Right ventricle myocardium inferior (tissue), 1 donor: ENCODE measurements at regions of chr5 and their contacts with region 1.

Region 1: GRCh38 chr5:141320225-141321169 is at the start of gene TAF7:
- DNase-seq: peak; percentile 96
- ATAC-seq: peak; percentile 99
- total RNA-seq, gene TAF7: 101 TPM

Region 2: DNA sequence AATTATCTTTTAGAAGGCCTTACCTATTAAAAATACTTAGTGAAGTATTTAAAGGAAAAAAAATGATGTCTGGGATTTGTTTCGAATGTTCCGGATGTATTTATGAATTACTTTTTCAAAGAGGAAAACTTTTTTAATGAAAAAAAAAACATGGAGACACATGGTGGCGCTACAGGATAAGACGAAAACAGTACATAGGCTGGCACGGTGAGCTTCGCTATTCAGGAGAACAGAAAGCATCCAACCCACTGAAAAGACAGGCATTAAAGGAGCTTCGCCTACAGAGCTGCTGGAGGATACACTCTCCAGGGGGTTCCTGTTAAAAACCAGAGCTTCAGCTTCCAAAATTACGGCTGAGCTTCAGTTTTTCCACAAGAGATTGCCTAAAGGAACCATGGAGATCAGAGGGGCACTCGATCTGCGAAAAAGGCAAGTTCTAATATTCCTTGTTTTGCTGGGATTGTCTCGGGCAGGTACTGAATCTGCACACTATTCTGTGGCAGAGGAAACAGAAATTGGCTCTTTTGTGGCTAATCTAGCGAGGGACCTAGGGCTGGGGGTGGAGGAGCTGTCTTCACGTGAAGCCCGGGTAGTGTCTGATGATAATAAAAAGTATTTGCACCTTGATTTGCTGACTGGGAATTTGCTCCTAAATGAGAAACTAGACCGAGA is 97.2 kb before region 1 on chr5 and contains the start of gene PCDHB14:
- intact Hi-C with region 1: loop called (anchors 10 kb)
- DNase-seq: no peak
- ATAC-seq: no peak
- total RNA-seq, gene PCDHB14: 4.1 TPM

Region 3: GRCh38 chr5:141245250-141245717 is 75.2 kb before region 1 on chr5 and contains the start of gene PCDHB15:
- intact Hi-C with region 1: no loop called
- DNase-seq: no peak
- ATAC-seq: no peak
- total RNA-seq, gene PCDHB15: 5.8 TPM

Region 4: DNA sequence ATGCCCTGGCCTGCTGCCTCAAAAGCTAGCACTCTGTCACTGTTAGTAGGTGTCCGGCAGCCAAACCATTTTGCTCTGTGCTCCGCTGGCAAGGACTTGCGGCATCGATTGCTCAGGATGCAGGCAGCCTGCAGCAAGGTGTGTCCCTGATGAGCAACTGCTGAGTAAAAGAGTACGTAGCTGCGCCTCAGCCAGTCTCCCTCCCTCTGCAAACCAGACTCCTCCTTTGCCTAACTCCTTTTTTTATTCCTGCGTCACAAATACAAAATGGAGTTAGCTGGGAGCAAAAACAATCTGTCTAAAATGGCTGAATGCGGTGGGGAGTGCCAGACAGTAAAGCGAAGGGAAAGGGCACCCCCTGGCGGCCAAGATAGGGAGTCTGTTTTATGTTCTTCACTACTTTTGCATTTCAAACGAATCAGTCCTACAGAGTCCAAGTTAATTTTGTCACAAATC is 237.2 kb after region 1 on chr5:
- intact Hi-C with region 1: loop called (anchors 2 kb)
- DNase-seq: peak; percentile 86
- ATAC-seq: peak; percentile 86